AG04449 (cell line): ENCODE measurements at regions of chr3 and their contacts with region 1.

Region 1: DNA sequence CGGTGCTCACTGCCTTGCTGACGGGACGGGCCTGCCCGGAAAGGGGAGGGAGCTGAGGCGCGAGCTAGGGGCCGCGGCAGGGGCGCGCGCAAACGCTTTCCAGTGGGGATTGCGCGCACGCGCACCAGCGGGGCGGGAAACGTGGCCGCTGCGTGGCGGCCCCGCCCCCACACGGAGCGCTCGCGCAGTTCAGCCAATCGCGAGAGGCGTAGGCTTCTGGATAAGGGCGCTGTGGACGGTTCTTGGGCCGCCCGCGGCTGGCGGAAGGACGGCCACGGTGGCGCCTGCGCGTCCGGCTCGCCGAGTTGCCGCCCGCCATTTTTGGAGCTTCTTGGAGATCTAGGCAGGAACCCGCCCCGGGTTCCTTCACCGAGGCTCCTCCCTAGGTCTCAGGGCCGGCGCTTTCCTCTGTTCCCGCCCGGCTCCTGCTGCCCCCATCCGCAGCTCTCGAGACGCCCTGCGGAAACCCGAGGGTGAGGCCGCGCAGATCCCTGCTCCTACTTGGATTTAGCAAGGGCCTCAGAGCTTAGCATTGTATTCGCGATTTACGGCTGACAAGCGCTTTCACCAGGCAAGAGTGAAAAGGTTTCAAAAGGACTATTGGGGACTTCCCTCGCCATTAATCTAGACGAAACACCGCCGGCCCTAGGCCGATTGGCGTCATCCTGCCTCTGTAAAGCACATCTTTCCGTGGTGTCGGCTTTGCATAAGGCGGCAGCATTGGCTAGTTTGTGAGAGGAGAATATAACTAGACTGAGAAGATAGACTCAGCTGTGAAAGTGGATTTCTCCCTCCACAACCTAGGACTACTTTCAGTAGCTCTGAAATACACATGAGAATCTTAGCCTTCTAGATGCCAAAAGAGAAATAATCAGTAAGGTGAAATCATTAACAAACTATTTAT is 496 bp upstream of the STAG1 start:
- DNase-seq: peak; percentile 76
- H3K4me3 ChIP-seq: peak overlapping the region; percentile 69
- CTCF ChIP-seq: peak; percentile 24

Region 2: GRCh38 chr3:136184703-136185102 is 568.0 kb before region 1 on chr3:
- CTCF ChIA-PET with region 1: no interaction called
- POLR2A ChIA-PET with region 1: no interaction called
- DNase-seq: no peak
- H3K4me3 ChIP-seq: no peak overlapping the region
- CTCF ChIP-seq: no peak

Region 3: DNA sequence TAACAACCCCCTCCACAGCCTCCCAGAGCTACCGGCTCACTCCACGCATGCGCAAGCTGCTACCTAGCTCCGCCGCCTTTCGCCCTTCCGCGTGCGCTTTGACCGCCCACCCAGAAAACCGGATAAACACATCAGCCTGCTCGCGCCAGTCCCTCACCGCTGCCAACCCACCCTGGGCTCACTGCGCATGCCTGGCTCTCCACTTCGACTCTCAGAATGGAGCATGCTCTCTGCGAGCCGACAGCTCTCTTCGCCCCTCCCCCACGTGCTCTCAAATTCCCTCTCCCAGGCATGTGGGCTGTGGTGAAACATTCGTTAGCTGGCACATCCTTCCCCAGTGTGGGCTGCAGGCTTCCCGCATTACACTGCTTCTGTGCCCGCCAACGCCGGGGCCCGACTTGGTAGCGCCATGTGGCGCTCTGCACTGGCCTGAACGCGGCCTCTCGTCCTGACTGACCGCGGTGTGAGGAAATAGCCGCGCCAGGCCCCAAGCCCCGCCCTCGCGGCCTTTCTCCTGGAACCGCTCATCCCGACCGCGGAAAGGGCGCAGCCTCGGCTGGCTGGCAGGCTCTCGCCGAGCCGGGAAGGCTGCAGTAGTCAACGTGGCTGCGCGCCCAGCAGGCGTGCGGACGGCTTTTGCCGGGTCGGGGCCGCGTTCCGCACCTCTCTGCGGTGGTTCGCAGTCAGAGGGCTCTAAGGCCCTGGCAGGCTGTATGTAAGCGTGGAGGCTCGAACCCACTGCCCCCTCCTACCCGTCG is 556.1 kb before region 1 on chr3:
- CTCF ChIA-PET with region 1: interaction called, 3 read pairs
- POLR2A ChIA-PET with region 1: interaction called, 14 read pairs
- DNase-seq: peak; percentile 97
- H3K4me3 ChIP-seq: peak overlapping the region; percentile 80
- CTCF ChIP-seq: no peak

Region 4: GRCh38 chr3:136385457-136385856 is 367.2 kb before region 1 on chr3:
- CTCF ChIA-PET with region 1: interaction called, 61 read pairs
- POLR2A ChIA-PET with region 1: no interaction called
- DNase-seq: no peak
- H3K4me3 ChIP-seq: no peak overlapping the region
- CTCF ChIP-seq: no peak

Region 5: DNA sequence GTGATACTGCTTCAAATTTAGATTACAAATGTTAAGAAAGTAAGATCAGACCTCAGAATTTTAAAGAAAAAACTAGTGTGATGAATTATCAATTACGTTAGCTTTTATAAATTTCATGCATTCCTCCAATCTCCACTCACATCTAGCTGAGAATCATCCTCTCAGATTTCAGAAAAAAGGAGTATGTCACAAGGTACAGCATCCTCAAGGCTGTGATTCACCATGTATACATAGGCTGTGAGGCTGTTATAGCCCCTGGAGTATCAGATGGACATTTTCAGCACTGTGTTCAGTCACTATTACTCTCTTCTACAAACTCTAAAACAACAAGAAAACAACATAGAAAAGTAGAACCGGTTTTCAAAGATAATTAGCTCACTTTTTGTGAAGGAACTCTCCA is 288.2 kb before region 1 on chr3:
- CTCF ChIA-PET with region 1: interaction called, 11 read pairs
- POLR2A ChIA-PET with region 1: no interaction called
- DNase-seq: peak; percentile 44
- H3K4me3 ChIP-seq: no peak overlapping the region
- CTCF ChIP-seq: no peak

Region 6: GRCh38 chr3:136778865-136779264 is 26.2 kb after region 1 on chr3:
- CTCF ChIA-PET with region 1: interaction called, 10 read pairs
- POLR2A ChIA-PET with region 1: interaction called, 4 read pairs
- DNase-seq: peak; percentile 16
- H3K4me3 ChIP-seq: no peak overlapping the region
- CTCF ChIP-seq: no peak

Region 7: DNA sequence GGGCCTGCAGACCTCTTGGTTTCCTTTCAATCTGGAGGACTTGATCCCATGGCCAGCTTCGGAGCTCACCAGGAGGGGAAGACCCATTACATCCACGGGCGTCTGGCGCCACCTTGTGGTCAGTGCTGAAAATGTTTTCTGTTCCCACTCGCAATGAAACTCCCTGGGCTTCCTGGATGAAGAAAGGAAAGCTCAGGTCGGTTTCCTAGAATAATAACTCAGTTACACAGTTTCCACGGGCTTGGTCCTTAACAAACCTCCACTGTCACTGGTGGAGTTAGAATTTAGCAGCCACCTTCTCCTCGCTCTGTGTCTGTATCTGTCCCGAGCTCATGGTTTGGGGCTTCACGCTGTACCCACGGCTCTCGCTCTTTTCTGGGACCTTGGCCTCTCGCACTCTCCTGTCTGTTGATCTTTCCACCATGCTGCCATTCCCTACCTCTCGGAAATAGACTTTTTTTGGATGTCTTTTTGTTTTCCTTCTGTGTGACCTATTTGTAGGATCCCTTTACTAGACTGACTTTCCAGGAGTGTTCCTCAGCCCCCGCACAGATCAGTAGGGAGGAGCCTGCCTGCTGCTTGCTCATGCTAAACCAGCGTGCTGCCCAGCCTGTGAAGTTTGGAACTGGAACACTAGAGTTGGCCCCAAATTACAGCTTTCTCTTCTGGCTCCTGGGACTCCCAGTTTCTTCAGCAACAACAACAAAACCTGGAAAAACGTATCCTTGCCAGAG is 261.4 kb after region 1 on chr3:
- CTCF ChIA-PET with region 1: interaction called, 89 read pairs
- POLR2A ChIA-PET with region 1: interaction called, 23 read pairs
- DNase-seq: peak; percentile 29
- H3K4me3 ChIP-seq: peak overlapping the region; percentile 67
- CTCF ChIP-seq: peak; percentile 75